Activated naive CD4-positive, alpha-beta T cell treated with anti-CD3 and anti-CD28 coated beads, Interleukin-2, amount 10 ng/mL, durations not matched to agents 7 days and 5 days (primary cell): ENCODE measurements at regions of chr6 and their contacts with region 1.

Region 1: GRCh38 chr6:31441365-31442267 is 38.2 kb downstream of the MICA start:
- DNase-seq: peak; percentile 89
- H3K4me3 Mint-ChIP-seq: no peak overlapping the region
- H3K27ac Mint-ChIP-seq: no peak overlapping the region
- H3K4me1 Mint-ChIP-seq: peaks cover 4% of the 10 kb centered on the region
- H3K27me3 Mint-ChIP-seq: peaks cover 78% of the 10 kb centered on the region

Region 2: DNA sequence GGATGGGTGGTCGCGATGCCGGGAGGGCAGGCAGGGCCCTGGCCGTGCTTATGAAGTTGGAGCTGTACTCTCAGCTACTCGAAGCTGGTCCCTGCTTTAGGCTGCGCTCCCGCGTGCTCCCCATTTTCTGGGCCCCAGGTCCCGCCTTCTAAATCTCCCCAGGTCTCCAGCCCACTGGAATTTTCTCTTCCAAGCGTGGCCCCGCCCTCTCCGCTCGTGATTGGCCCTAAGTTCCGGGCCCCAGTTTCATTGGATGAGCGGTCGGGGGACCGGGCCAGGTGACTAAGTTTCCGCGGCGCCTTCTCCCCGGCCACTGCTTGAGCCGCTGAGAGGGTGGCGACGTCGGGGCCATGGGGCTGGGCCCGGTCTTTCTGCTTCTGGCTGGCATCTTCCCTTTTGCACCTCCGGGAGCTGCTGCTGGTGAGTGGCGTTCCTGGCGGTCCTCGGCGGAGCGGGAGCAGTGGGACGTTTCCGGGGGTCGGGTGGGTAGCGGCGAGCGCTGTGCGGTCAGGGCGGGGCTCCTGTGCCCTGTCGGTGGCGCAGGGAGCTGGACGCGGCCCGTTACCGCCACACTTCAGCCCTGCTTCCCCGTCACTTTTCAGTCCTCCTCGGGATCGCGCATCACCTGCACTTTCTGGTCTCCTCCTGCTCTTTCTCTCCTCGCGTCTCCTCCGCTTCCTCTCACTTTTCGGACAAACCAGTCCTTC is 38.2 kb before region 1 on chr6 and contains the start of gene MICA:
- CTCF ChIA-PET with region 1: interaction called, 69 read pairs
- DNase-seq: peak; percentile 85
- H3K4me3 Mint-ChIP-seq: peak within 1 kb of the TSS; percentile 79
- H3K27ac Mint-ChIP-seq: peak within 1 kb of the TSS; percentile 67
- H3K4me1 Mint-ChIP-seq: peaks cover 71% of the 10 kb centered on the region
- H3K27me3 Mint-ChIP-seq: peaks cover 12% of the 10 kb centered on the region